Panc1 (cell line): ENCODE measurements at regions of chr14 and their contacts with region 1.

Region 1: GRCh38 chr14:22852940-22853767 is 16.8 kb downstream of the MMP14 start:
- DNase-seq: no peak
- ATAC-seq: peak; percentile 95
- H3K4me3 ChIP-seq: peak overlapping the region; percentile 33 to 69
- H3K27ac ChIP-seq: peak overlapping the region; percentile 63; the same call in 1 of the 2 replicates
- H3K4me1 ChIP-seq: no peaks in the 10 kb centered on the region
- H3K27me3 ChIP-seq: no peaks in the 10 kb centered on the region
- CTCF ChIP-seq: peak; percentile 89

Region 2: GRCh38 chr14:22570132-22570949 is 282.8 kb before region 1 on chr14:
- CTCF ChIA-PET with region 1: interaction called, 12 read pairs
- POLR2A ChIA-PET with region 1: no interaction called
- in situ Hi-C with region 1: no loop called
- intact Hi-C with region 1: no loop called
- DNase-seq: peak; percentile 59
- ATAC-seq: peak; percentile 73
- H3K4me3 ChIP-seq: no peak overlapping the region
- H3K27ac ChIP-seq: no peak overlapping the region
- H3K4me1 ChIP-seq: no peaks in the 10 kb centered on the region
- H3K27me3 ChIP-seq: no peaks in the 10 kb centered on the region
- CTCF ChIP-seq: peak; percentile 76

Region 3: GRCh38 chr14:22653012-22653621 is 200.0 kb before region 1 on chr14:
- CTCF ChIA-PET with region 1: no interaction called
- POLR2A ChIA-PET with region 1: no interaction called
- in situ Hi-C with region 1: no loop called
- intact Hi-C with region 1: loop called (anchors 10 kb)
- DNase-seq: no peak
- ATAC-seq: peak; percentile 93
- H3K4me3 ChIP-seq: no peak overlapping the region
- H3K27ac ChIP-seq: no peak overlapping the region
- H3K4me1 ChIP-seq: no peaks in the 10 kb centered on the region
- H3K27me3 ChIP-seq: no peaks in the 10 kb centered on the region
- CTCF ChIP-seq: peak; percentile 81

Region 4: DNA sequence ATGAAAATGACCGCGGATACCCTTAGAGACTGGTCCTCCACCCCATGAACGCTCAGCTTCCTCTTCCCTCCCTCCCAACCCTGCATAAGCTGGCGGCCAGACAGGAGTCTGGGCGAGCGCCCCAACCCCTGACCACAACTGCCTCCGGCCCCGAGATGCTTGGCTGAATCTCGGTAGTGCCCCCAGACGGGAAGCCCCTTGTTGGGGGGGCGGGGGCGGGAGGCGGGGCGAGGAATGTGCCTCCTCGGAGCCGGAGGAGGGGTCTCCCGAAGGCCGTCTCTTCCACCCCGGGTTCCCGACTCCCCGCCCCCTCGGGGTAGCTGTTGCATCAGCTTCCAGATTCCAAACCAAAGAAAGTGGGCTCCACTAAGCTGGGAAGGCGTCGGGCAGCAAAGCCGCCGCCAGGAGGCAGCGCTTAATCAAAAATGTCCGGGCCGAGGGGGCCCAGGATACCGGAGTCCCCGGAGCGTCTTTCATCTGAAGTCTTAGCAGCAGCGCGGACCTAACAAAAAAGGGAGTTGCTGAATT is 30.5 kb before region 1 on chr14:
- CTCF ChIA-PET with region 1: interaction called, 50 read pairs
- POLR2A ChIA-PET with region 1: interaction called, 3 read pairs
- in situ Hi-C with region 1: no loop called
- intact Hi-C with region 1: loop called (anchors 2 kb)
- DNase-seq: no peak
- ATAC-seq: peak; percentile 91
- H3K4me3 ChIP-seq: peak overlapping the region; percentile 35 to 56
- H3K27ac ChIP-seq: peak overlapping the region; percentile 79
- H3K4me1 ChIP-seq: peaks cover 23% of the 10 kb centered on the region
- H3K27me3 ChIP-seq: no peaks in the 10 kb centered on the region
- CTCF ChIP-seq: peak; percentile 84

Region 5: DNA sequence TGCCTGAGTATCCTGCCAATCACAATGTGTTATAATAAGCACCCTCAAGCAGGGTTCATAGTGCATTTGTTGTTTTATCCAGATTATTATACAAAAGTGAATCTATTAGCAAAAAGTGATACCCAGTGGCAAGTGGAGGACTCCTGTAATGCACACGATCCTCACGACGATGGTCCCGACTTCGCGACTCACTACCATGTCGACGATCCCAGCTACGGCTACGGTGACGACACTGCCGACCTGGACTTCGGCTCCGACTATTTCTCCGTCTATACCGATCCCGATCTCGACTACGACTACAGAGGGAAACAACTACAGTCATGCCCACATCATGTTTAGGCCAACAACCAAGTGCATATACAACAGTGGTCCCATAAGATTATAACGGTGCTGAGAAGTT is 52.9 kb after region 1 on chr14:
- CTCF ChIA-PET with region 1: no interaction called
- POLR2A ChIA-PET with region 1: no interaction called
- in situ Hi-C with region 1: no loop called
- intact Hi-C with region 1: no loop called
- DNase-seq: no peak
- ATAC-seq: no peak
- H3K4me3 ChIP-seq: no peak overlapping the region
- H3K27ac ChIP-seq: no peak overlapping the region
- H3K4me1 ChIP-seq: no peaks in the 10 kb centered on the region
- H3K27me3 ChIP-seq: no peaks in the 10 kb centered on the region
- CTCF ChIP-seq: no peak

Region 6: GRCh38 chr14:23183479-23183878 is 330.3 kb after region 1 on chr14 and contains the start of gene SLC7A8:
- CTCF ChIA-PET with region 1: no interaction called
- POLR2A ChIA-PET with region 1: no interaction called
- in situ Hi-C with region 1: no loop called
- intact Hi-C with region 1: no loop called
- DNase-seq: no peak
- ATAC-seq: no peak
- H3K4me3 ChIP-seq: peak within 1 kb of the TSS; percentile 39 to 40
- H3K27ac ChIP-seq: no peak within 1 kb of the TSS
- H3K4me1 ChIP-seq: no peaks in the 10 kb centered on the region; the same call in 1 of the 2 replicates
- H3K27me3 ChIP-seq: peaks cover 4% of the 10 kb centered on the region
- CTCF ChIP-seq: no peak
- total RNA-seq, gene SLC7A8: 0.90 TPM